Right ventricle myocardium inferior (tissue), 1 donor: ENCODE measurements at regions of chr3 and their contacts with region 1.

Region 1: GRCh38 chr3:146544002-146544928 is at the start of gene PLSCR1:
- DNase-seq: peak; percentile 97
- ATAC-seq: peak; percentile 94
- total RNA-seq, gene PLSCR1: 29.9 TPM

Region 2: DNA sequence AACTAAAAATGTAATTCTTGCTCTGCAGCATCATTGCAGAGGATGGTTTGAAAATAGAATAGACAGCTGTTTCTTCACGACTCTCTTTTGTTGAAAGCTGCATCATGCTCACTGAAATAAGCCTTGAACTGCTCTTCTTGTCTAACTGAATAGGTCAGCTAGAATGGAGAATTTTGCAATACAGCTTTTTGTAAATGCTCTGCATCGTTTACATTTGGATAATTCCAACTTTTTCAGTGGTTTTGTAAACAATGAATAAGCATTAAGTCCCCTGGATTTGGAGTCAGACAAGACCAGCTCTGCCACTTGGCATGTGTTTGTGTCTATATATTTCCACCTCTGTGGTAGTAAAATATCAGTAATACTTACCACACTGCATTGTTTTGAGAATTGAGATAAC is 170.1 kb before region 1 on chr3:
- intact Hi-C with region 1: loop called (anchors 10 kb)
- DNase-seq: no peak
- ATAC-seq: no peak

Region 3: DNA sequence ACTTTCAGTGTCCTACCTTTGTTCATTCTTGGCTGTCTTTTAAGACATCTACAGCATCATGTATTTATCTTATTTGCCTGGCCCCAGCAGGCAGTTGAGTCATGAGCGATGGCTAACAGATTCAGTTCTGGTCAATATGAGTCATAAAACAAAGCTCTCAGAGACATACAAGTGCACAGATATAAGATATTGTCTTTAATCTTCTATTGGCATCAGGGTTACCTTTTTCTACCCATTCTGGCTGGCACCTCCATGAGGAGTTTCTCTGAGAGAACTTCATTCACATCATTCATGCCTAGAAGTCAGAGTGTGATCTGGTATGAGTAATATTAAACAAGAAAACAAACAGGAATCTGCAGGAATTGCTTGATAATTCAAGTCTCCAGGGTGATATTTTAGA is 122.4 kb before region 1 on chr3:
- intact Hi-C with region 1: no loop called
- DNase-seq: no peak
- ATAC-seq: no peak

Region 4: GRCh38 chr3:146504498-146505197 is 39.6 kb before region 1 on chr3:
- intact Hi-C with region 1: loop called (anchors 5 kb)
- DNase-seq: no peak
- ATAC-seq: no peak